GM12878 (cell line): ENCODE measurements at regions of chr2 and their contacts with region 1.

Region 1: GRCh38 chr2:46062637-46063412 is 234.4 kb upstream of the EPAS1 start:
- DNase-seq: no peak
- ATAC-seq: peak; percentile 93
- H3K4me3 ChIP-seq: no peak overlapping the region
- H3K27ac ChIP-seq: no peak overlapping the region
- H3K4me1 ChIP-seq: no peaks in the 10 kb centered on the region
- H3K27me3 ChIP-seq: no peaks in the 10 kb centered on the region
- CTCF ChIP-seq: peak; percentile 79 to 89 (median 83)
- EP300 ChIP-seq: no peak
- POLR2A ChIP-seq: no peak
- RAD21 ChIP-seq: peak; percentile 89

Region 2: GRCh38 chr2:45370362-45370761 is 692.5 kb before region 1 on chr2:
- CTCF ChIA-PET with region 1: no interaction called
- POLR2A ChIA-PET with region 1: no interaction called
- RAD21 ChIA-PET with region 1: no interaction called
- SMC1A ChIA-PET with region 1: no interaction called
- in situ Hi-C with region 1: no loop called
- intact Hi-C with region 1: no loop called
- DNase-seq: no peak
- ATAC-seq: no peak
- H3K4me3 ChIP-seq: no peak overlapping the region
- H3K27ac ChIP-seq: no peak overlapping the region
- H3K4me1 ChIP-seq: no peaks in the 10 kb centered on the region
- H3K27me3 ChIP-seq: no peaks in the 10 kb centered on the region
- CTCF ChIP-seq: no peak
- EP300 ChIP-seq: no peak
- POLR2A ChIP-seq: no peak
- RAD21 ChIP-seq: no peak

Region 3: DNA sequence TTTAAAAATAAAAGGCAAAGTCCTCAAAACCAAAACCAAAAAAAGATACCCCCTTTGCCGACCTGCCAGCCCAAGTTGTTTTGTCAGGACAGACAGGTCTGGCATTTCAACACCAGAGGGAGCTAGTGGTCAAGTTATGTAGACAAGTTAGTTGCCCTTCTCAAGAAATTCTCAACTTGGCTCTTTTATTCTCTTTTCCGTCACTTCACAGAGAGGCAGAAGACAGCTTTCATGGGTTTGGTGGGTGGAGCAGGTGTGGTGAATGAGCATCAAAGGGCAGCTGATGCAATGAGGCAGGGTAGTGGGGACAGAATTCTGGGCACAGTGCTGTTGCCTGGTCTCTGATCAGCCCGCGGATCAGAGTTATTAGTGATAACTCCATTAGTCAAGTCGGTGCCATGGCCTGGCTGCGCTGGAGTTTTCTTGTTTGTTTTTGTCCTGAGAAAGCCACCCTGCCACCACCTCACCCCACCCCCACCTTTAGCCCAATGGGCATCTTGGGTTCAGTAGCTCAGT is 69.3 kb before region 1 on chr2:
- CTCF ChIA-PET with region 1: interaction called, 10 read pairs
- POLR2A ChIA-PET with region 1: no interaction called
- RAD21 ChIA-PET with region 1: interaction called, 4 read pairs
- SMC1A ChIA-PET with region 1: interaction called, 4 read pairs
- in situ Hi-C with region 1: no loop called
- intact Hi-C with region 1: no loop called
- DNase-seq: peak; percentile 23
- ATAC-seq: peak; percentile 90
- H3K4me3 ChIP-seq: no peak overlapping the region
- H3K27ac ChIP-seq: no peak overlapping the region
- H3K4me1 ChIP-seq: no peaks in the 10 kb centered on the region
- H3K27me3 ChIP-seq: no peaks in the 10 kb centered on the region
- CTCF ChIP-seq: peak; percentile 72 to 79 (median 79)
- EP300 ChIP-seq: no peak
- POLR2A ChIP-seq: no peak
- RAD21 ChIP-seq: peak; percentile 81

Region 4: GRCh38 chr2:46073540-46074018 is 10.8 kb after region 1 on chr2:
- CTCF ChIA-PET with region 1: interaction called, 56 read pairs
- POLR2A ChIA-PET with region 1: interaction called, 5 read pairs
- RAD21 ChIA-PET with region 1: interaction called, 6 read pairs
- SMC1A ChIA-PET with region 1: interaction called, 57 read pairs
- in situ Hi-C with region 1: no loop called
- intact Hi-C with region 1: no loop called
- DNase-seq: no peak
- ATAC-seq: no peak
- H3K4me3 ChIP-seq: no peak overlapping the region
- H3K27ac ChIP-seq: no peak overlapping the region
- H3K4me1 ChIP-seq: no peaks in the 10 kb centered on the region
- H3K27me3 ChIP-seq: no peaks in the 10 kb centered on the region
- CTCF ChIP-seq: no peak
- EP300 ChIP-seq: no peak
- POLR2A ChIP-seq: no peak
- RAD21 ChIP-seq: no peak

Region 5: DNA sequence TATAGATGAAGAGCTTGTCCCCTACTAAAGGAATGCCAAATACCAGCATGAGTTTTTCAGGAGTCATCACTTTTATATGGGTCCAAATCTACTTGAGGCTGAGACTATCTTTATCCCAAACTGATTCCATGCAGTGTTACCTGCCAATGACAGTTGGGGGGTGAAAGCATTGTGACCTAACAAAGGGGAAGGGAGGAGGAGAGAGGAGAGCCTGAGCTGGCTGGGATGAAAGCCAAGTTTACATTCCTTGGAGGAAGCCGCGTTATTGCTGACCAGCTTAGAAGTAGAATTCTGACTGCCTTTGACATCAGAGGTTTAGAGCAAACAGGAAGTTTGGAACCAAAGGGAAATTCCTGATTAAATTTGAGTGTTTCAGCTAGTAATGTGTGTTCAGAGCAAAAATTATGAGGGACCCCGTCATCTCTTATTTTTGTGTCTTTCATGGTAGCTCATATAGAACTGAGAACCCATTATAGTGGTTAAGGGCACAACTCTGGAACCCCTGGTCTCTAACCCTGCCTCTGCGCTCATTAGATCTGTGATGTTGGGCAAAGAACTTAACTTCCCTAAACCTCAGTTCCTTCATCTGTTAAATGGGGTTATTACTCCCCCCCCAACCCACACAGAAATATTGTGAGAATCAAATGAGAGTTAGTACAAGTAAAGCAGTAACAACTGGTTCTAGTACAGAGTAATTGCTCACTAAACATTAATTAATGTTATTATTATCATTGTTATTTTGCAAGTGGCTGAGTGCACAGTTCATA is 35.1 kb after region 1 on chr2:
- CTCF ChIA-PET with region 1: interaction called, 13 read pairs
- POLR2A ChIA-PET with region 1: no interaction called
- RAD21 ChIA-PET with region 1: interaction called, 6 read pairs
- SMC1A ChIA-PET with region 1: interaction called, 21 read pairs
- in situ Hi-C with region 1: no loop called
- intact Hi-C with region 1: no loop called
- DNase-seq: no peak
- ATAC-seq: peak; percentile 65
- H3K4me3 ChIP-seq: no peak overlapping the region
- H3K27ac ChIP-seq: no peak overlapping the region
- H3K4me1 ChIP-seq: no peaks in the 10 kb centered on the region
- H3K27me3 ChIP-seq: no peaks in the 10 kb centered on the region
- CTCF ChIP-seq: no peak
- EP300 ChIP-seq: no peak
- POLR2A ChIP-seq: no peak
- RAD21 ChIP-seq: no peak

Region 6: DNA sequence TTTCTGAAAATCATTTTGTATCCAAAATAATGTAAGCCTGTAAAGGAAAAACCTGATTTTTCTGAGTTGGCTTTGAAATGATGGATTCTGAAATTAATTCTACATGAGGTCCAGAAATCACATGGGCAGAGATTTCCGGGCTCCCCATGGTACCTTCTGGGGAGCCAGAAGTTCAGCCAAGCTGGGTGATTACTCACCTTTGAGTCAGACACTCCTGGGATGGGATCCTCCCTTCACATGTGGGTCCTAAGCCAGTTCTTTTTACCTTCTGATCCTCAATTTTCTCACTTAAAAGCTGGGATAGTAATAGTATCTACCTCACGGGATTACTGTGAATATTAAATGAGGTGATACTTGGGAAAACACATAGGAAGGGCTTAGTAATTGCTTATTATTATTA is 54.6 kb after region 1 on chr2:
- CTCF ChIA-PET with region 1: no interaction called
- POLR2A ChIA-PET with region 1: no interaction called
- RAD21 ChIA-PET with region 1: no interaction called
- SMC1A ChIA-PET with region 1: no interaction called
- in situ Hi-C with region 1: no loop called
- intact Hi-C with region 1: no loop called
- DNase-seq: no peak
- ATAC-seq: no peak
- H3K4me3 ChIP-seq: no peak overlapping the region
- H3K27ac ChIP-seq: no peak overlapping the region
- H3K4me1 ChIP-seq: no peaks in the 10 kb centered on the region
- H3K27me3 ChIP-seq: no peaks in the 10 kb centered on the region
- CTCF ChIP-seq: no peak
- EP300 ChIP-seq: no peak
- POLR2A ChIP-seq: no peak
- RAD21 ChIP-seq: no peak

Region 7: DNA sequence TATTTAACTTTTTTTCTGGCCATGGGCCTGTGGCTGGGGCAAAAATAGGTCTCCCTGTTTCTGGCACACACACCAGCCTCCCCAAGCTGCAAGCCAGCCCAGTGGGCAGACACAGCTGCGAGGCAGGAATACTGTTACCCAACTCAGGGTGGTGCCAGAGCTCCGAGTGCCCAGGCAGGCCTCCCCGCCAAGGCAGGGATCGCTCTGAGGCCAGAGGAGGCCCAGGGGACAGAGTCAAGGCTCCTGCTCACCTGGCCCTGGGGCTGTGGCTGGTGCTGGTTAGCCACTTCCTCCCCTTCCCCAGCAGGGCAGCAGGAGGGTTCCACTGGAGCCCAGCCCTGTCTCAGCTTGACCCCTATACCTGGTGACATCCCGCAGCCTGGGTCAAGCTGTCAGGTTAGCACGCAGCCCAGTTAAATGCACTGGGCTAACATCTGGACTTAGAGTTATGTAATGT is 167.3 kb after region 1 on chr2:
- CTCF ChIA-PET with region 1: interaction called, 40 read pairs
- POLR2A ChIA-PET with region 1: no interaction called
- RAD21 ChIA-PET with region 1: interaction called, 43 read pairs
- SMC1A ChIA-PET with region 1: interaction called, 29 read pairs
- in situ Hi-C with region 1: no loop called
- intact Hi-C with region 1: loop called (anchors 5 kb)
- DNase-seq: peak; percentile 37
- ATAC-seq: peak; percentile 86
- H3K4me3 ChIP-seq: no peak overlapping the region
- H3K27ac ChIP-seq: peak overlapping the region; percentile 36
- H3K4me1 ChIP-seq: peaks cover 14% of the 10 kb centered on the region
- H3K27me3 ChIP-seq: no peaks in the 10 kb centered on the region
- CTCF ChIP-seq: peak; percentile 4 to 61 (median 45); a peak in 3 of 6 replicates
- EP300 ChIP-seq: no peak
- POLR2A ChIP-seq: no peak
- RAD21 ChIP-seq: peak; percentile 48; the same call in 1 of the 2 replicates

Region 8: GRCh38 chr2:46364797-46365457 is 302.1 kb after region 1 on chr2:
- CTCF ChIA-PET with region 1: interaction called, 51 read pairs
- POLR2A ChIA-PET with region 1: interaction called, 5 read pairs
- RAD21 ChIA-PET with region 1: interaction called, 34 read pairs
- SMC1A ChIA-PET with region 1: interaction called, 32 read pairs
- in situ Hi-C with region 1: no loop called
- intact Hi-C with region 1: loop called (anchors 1 kb)
- DNase-seq: no peak
- ATAC-seq: peak; percentile 79
- H3K4me3 ChIP-seq: no peak overlapping the region
- H3K27ac ChIP-seq: no peak overlapping the region
- H3K4me1 ChIP-seq: no peaks in the 10 kb centered on the region
- H3K27me3 ChIP-seq: peaks cover 0 to 7% of the 10 kb centered on the region in 2 experiments; a peak in 2 of 4 replicates
- CTCF ChIP-seq: peak; percentile 65 to 79 (median 78)
- EP300 ChIP-seq: no peak
- POLR2A ChIP-seq: no peak
- RAD21 ChIP-seq: peak; percentile 81

Region 9: DNA sequence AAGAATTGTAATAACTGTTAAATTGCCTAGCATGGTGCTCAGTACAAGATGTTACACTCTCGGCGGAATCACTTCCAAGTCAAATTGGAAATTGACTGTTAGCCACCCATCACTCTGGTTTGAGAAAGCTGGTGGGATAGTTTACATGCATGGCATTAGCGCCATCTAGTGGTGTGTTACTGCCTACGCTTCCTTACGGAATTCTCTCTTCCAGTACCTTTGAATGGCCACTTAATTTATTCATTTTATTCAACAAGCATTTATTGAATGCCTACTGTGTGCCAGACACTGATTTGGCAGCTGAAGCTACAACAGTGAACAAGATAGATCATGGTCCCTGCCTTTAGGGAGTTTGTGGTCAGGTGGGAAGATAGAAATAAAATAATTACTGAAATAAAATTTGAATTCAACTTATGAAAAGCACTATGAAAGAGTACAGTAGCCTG is 587.8 kb after region 1 on chr2:
- CTCF ChIA-PET with region 1: interaction called, 5 read pairs
- POLR2A ChIA-PET with region 1: no interaction called
- RAD21 ChIA-PET with region 1: interaction called, 5 read pairs
- SMC1A ChIA-PET with region 1: interaction called, 7 read pairs
- in situ Hi-C with region 1: no loop called
- intact Hi-C with region 1: loop called (anchors 10 kb)
- DNase-seq: peak; percentile 48
- ATAC-seq: peak; percentile 93
- H3K4me3 ChIP-seq: no peak overlapping the region
- H3K27ac ChIP-seq: no peak overlapping the region
- H3K4me1 ChIP-seq: no peaks in the 10 kb centered on the region
- H3K27me3 ChIP-seq: no peaks in the 10 kb centered on the region
- CTCF ChIP-seq: peak; percentile 84 to 94 (median 89)
- EP300 ChIP-seq: no peak
- POLR2A ChIP-seq: no peak
- RAD21 ChIP-seq: peak; percentile 93

Region 10: GRCh38 chr2:46737577-46737976 is 674.8 kb after region 1 on chr2:
- CTCF ChIA-PET with region 1: no interaction called
- POLR2A ChIA-PET with region 1: no interaction called
- RAD21 ChIA-PET with region 1: no interaction called
- SMC1A ChIA-PET with region 1: no interaction called
- in situ Hi-C with region 1: no loop called
- intact Hi-C with region 1: no loop called
- DNase-seq: no peak
- ATAC-seq: no peak
- H3K4me3 ChIP-seq: no peak overlapping the region
- H3K27ac ChIP-seq: no peak overlapping the region
- H3K4me1 ChIP-seq: no peaks in the 10 kb centered on the region
- H3K27me3 ChIP-seq: no peaks in the 10 kb centered on the region
- CTCF ChIP-seq: no peak
- EP300 ChIP-seq: no peak
- POLR2A ChIP-seq: no peak
- RAD21 ChIP-seq: no peak